ENCODE measurements at regions of chr9 and their contacts with region 1.

Region 1: GRCh38 chr9:125241000-125241862 is at the start of gene HSPA5:
- DNase-seq: peak; percentile 94
- ATAC-seq: peak; percentile 88
- H3K4me3 Mint-ChIP-seq: peak within 1 kb of the TSS; percentile 94
- H3K27ac Mint-ChIP-seq: peak within 1 kb of the TSS; percentile 98
- H3K4me1 Mint-ChIP-seq: peaks cover 54% of the 10 kb centered on the region
- H3K27me3 Mint-ChIP-seq: no peaks in the 10 kb centered on the region
- CTCF ChIP-seq: no peak
- total RNA-seq, gene HSPA5: 118 and 119 TPM in 2 replicates

Region 2: DNA sequence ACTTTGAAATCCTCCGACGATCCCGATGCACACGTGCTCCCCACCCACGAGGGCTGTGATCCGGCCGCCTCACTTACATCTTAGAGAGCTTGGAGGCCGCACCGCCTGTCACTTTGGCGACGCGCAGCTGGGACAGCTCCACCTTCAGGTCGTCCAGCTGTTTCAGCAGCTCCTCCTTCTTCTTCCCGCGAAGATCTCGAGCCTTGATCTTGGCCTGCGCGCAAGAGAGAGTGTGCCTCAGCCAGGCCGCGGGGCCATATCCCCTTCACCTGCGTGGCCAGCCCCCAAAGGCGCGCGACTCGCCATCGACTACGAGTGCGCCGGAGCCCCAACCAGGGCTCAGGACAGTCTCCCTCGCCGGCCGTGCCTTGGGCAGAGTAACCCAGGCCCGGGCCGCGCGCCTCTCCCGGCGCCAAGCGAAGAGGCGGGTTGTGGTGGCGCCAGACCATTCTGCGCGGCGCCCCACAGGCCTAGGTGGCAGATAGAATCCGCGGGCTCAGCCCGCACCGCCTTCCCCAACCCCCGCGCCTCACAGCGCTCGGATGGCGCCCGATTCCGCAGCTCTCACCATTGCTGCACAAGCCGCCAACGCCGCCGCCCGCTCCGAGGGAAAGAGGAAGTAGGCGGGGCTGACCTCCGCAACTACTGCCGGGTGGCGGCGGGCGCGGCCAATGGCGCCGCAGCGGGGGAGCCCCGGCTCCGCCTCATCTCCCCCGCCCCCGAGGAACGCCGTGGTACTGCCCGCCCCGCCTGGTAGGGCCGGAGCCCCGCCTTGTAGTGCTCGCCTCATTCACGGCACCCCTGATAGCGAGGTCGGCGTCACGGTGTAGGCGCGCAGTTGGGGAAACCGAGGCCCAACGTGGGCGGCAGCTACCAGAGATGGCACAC is 379.6 kb before region 1 on chr9 and contains the starts of genes ARPC5L and RPL35:
- CTCF ChIA-PET with region 1: no interaction called
- POLR2A ChIA-PET with region 1: interaction called, 20 read pairs
- intact Hi-C with region 1: loop called (anchors 5 kb)
- DNase-seq: peak; percentile 92
- ATAC-seq: peak; percentile 95
- H3K4me3 Mint-ChIP-seq: peak within 1 kb of the TSS; percentile 95
- H3K27ac Mint-ChIP-seq: peak within 1 kb of the TSS; percentile 94
- H3K4me1 Mint-ChIP-seq: peaks cover 47% of the 10 kb centered on the region
- H3K27me3 Mint-ChIP-seq: no peaks in the 10 kb centered on the region
- CTCF ChIP-seq: no peak
- total RNA-seq, gene ARPC5L: 91.5 and 93.1 TPM in 2 replicates
- total RNA-seq, gene RPL35: 2,037 and 2,426 TPM in 2 replicates

Region 3: DNA sequence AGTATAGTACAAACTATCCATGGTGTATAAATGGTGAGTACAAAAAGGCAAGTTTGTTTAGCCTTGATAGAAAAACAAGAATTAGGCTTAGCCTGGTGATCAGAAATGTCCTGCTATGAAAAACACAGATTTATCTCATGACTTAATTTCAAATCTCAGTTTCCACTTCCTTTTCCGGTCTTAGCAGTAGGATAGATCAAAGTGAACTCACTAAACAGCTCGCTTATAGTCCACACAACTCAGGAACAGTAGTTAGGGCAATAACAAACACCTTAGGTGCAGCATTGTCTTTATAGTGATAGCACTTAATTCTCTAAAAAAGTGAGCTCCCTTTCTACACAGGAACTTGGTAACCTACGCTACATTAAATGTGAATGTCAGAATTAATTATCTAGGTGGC is 311.8 kb before region 1 on chr9:
- CTCF ChIA-PET with region 1: no interaction called
- POLR2A ChIA-PET with region 1: interaction called, 10 read pairs
- intact Hi-C with region 1: no loop called
- DNase-seq: no peak
- ATAC-seq: no peak
- H3K4me3 Mint-ChIP-seq: no peak overlapping the region
- H3K27ac Mint-ChIP-seq: no peak overlapping the region
- H3K4me1 Mint-ChIP-seq: peaks cover 13% of the 10 kb centered on the region
- H3K27me3 Mint-ChIP-seq: no peaks in the 10 kb centered on the region
- CTCF ChIP-seq: no peak

Region 4: DNA sequence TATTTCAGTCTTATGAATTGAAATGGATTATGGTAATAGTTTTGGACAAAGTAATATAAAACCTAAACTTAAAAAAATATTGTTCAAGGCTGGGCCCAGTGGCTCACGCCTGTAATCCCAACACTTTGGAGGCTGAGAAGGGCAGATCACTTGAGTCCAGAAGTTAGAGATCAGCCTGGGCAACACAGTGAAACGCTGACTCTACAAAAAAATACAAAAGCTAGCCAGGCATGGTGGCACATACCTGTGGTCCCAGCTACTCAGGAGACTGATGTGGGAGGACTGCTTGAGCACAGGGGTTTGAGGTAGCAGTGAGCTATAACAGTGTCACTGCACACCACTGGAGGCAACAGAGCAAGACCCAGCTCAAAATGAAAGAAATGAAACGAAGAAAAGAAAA is 179.8 kb before region 1 on chr9:
- CTCF ChIA-PET with region 1: no interaction called
- POLR2A ChIA-PET with region 1: no interaction called
- intact Hi-C with region 1: no loop called
- DNase-seq: no peak
- ATAC-seq: no peak
- H3K4me3 Mint-ChIP-seq: no peak overlapping the region
- H3K27ac Mint-ChIP-seq: no peak overlapping the region
- H3K4me1 Mint-ChIP-seq: no peaks in the 10 kb centered on the region
- H3K27me3 Mint-ChIP-seq: no peaks in the 10 kb centered on the region
- CTCF ChIP-seq: no peak

Region 5: GRCh38 chr9:125151730-125152129 is 89.5 kb before region 1 on chr9:
- CTCF ChIA-PET with region 1: no interaction called
- POLR2A ChIA-PET with region 1: interaction called, 11 read pairs
- intact Hi-C with region 1: no loop called
- DNase-seq: no peak
- ATAC-seq: no peak
- H3K4me3 Mint-ChIP-seq: no peak overlapping the region
- H3K27ac Mint-ChIP-seq: no peak overlapping the region
- H3K4me1 Mint-ChIP-seq: no peaks in the 10 kb centered on the region
- H3K27me3 Mint-ChIP-seq: no peaks in the 10 kb centered on the region
- CTCF ChIP-seq: no peak

Region 6: GRCh38 chr9:125200210-125201047 is 40.8 kb before region 1 on chr9 and contains the start of gene RABEPK:
- CTCF ChIA-PET with region 1: no interaction called
- POLR2A ChIA-PET with region 1: interaction called, 28 read pairs
- intact Hi-C with region 1: loop called (anchors 1 kb)
- DNase-seq: peak; percentile 95
- ATAC-seq: peak; percentile 98
- H3K4me3 Mint-ChIP-seq: peak within 1 kb of the TSS; percentile 94
- H3K27ac Mint-ChIP-seq: peak within 1 kb of the TSS; percentile 92
- H3K4me1 Mint-ChIP-seq: peaks cover 13% of the 10 kb centered on the region
- H3K27me3 Mint-ChIP-seq: no peaks in the 10 kb centered on the region
- CTCF ChIP-seq: no peak
- total RNA-seq, gene RABEPK: 19.1 and 19.4 TPM in 2 replicates

Region 7: DNA sequence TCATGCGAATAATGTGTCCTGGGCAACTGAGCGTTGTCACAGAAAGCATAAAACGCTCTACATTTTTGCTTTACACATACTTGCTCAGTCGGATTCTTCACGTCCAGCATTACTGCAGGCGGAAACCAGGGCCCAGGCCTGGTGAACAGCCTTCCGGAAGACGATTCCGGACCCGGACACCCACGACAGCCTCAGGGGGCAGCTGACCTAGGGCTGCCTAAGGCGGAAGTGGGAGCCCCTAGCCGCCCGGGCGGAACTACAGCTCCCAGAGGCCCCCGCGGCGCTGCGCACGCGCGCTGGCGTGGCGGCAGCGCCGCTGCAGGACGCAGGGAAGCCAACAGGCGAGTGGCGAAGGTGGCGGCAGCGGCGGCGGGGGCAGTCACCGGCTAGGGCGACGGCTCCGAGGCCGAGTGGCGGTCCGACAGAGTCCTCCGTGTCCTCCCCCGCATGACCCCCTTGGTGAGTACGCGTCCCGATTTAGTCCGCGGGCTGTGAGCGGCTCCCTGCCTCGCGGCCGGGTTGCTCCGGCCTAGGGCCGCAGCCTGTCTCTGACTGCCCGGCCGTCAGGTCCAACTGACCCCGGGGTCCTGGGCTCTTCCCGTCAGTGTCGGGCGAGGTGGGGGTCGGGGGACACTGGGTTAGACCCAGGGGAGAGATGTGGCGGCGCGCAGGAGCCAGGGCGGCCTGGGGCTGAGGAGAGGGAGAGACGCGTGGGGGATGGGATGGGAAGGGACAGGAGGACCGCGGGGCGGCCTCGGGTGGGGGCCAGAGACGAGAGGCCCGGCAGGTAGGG is 20.5 kb after region 1 on chr9 and contains the start of gene GAPVD1:
- CTCF ChIA-PET with region 1: interaction called, 9 read pairs
- POLR2A ChIA-PET with region 1: interaction called, 201 read pairs
- intact Hi-C with region 1: loop called (anchors 1 kb)
- DNase-seq: peak; percentile 97
- ATAC-seq: peak; percentile 93
- H3K4me3 Mint-ChIP-seq: peak within 1 kb of the TSS; percentile 96
- H3K27ac Mint-ChIP-seq: peak within 1 kb of the TSS; percentile 99
- H3K4me1 Mint-ChIP-seq: peaks cover 48% of the 10 kb centered on the region
- H3K27me3 Mint-ChIP-seq: peaks cover 2% of the 10 kb centered on the region
- CTCF ChIP-seq: no peak
- total RNA-seq, gene GAPVD1: 46.6 and 53.9 TPM in 2 replicates

Measured in activated B cell treated with CpG ODN at 0.5 μM for 24 hours (primary cell).